ENCODE measurements at regions of chr3 and their contacts with region 1.

Region 1: GRCh38 chr3:94234177-94234788 is 171.4 kb downstream of the NSUN3 start:
- DNase-seq: peak; percentile 60

Region 2: DNA sequence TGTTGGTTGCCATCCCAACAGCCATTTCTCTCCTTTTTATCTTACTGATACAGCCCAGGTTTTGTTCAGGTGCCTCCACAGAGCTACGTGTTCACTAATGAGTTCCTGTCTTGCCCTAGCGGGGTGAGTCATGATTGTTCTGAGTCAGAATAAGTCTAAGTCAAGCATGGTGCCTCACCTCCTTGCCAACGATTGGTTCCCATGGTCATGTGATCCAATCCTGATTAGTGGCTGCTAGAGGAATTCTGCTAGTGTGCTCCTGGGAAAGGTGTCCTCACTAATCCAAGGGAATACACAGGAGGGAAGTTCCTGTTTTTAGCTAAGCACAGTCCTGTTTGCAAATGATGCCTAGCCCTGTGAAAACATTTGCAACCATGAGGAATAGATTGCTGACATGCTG is 71.6 kb before region 1 on chr3:
- CTCF ChIA-PET with region 1: no interaction called
- POLR2A ChIA-PET with region 1: no interaction called
- DNase-seq: no peak

Region 3: GRCh38 chr3:94249585-94249984 is 15.3 kb after region 1 on chr3:
- CTCF ChIA-PET with region 1: interaction called, 12 read pairs
- POLR2A ChIA-PET with region 1: no interaction called
- DNase-seq: peak; percentile 71

Measured in HEK293T (cell line).